AG04450 (cell line): ENCODE measurements at regions of chr2 and their contacts with region 1.

Region 1: GRCh38 chr2:26605195-26605998 is 35.8 kb downstream of the CIB4 start:
- DNase-seq: no peak
- H3K4me3 ChIP-seq: no peak overlapping the region
- H3K27ac ChIP-seq: no peak overlapping the region
- H3K27me3 ChIP-seq: peaks cover 40% of the 10 kb centered on the region
- CTCF ChIP-seq: peak; percentile 90

Region 2: GRCh38 chr2:26623541-26624396 is 18.4 kb after region 1 on chr2:
- CTCF ChIA-PET with region 1: interaction called, 14 read pairs
- POLR2A ChIA-PET with region 1: no interaction called
- DNase-seq: no peak
- H3K4me3 ChIP-seq: peak overlapping the region; percentile 10; the same call in 1 of the 2 replicates
- H3K27ac ChIP-seq: peak overlapping the region; percentile 31
- H3K27me3 ChIP-seq: peaks cover 22% of the 10 kb centered on the region
- CTCF ChIP-seq: no peak

Region 3: DNA sequence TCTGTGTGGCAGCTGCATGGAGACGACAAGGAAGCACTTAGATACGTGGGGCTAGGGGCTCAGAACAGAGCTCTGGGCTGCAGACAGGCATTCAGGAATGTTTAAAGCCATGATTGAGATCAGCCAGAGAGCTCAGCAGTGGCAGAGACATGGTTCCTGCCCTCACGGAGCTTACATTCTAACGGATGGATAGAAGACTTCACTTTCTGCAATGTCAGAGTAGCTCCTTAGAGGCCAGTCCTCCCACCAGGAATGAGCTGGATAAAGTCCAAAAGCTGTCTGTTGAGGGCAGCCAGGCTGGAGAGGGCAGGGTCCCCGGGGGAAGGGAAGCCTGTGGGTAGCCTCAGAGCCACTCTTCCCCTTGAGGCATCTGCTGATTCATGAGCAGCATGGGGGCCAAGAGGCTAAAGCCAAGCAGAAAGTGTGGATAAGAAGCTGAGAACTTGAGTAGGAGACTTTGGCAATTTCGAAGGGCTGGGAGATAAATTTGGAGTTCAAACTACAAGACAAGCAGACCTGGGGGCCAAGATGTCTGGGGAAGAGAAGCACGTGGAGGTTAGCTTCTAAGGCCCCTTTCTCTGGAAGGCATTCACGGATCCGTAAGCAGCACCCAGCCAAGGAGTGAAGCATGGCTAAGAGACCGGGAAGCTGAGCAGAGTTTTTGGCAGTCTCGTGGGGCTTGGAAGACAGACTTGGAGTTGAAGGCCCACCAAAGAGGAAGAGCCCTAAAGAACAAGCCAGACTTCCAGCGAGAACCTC is 45.5 kb after region 1 on chr2:
- CTCF ChIA-PET with region 1: interaction called, 11 read pairs
- POLR2A ChIA-PET with region 1: no interaction called
- DNase-seq: no peak
- H3K4me3 ChIP-seq: no peak overlapping the region
- H3K27ac ChIP-seq: peak overlapping the region; percentile 21
- H3K27me3 ChIP-seq: peaks cover 67% of the 10 kb centered on the region
- CTCF ChIP-seq: no peak

Region 4: GRCh38 chr2:26735096-26735495 is 129.7 kb after region 1 on chr2:
- CTCF ChIA-PET with region 1: interaction called, 16 read pairs
- POLR2A ChIA-PET with region 1: no interaction called
- DNase-seq: peak; percentile 74
- H3K4me3 ChIP-seq: no peak overlapping the region
- H3K27ac ChIP-seq: no peak overlapping the region
- H3K27me3 ChIP-seq: peaks cover 17% of the 10 kb centered on the region
- CTCF ChIP-seq: no peak

Region 5: DNA sequence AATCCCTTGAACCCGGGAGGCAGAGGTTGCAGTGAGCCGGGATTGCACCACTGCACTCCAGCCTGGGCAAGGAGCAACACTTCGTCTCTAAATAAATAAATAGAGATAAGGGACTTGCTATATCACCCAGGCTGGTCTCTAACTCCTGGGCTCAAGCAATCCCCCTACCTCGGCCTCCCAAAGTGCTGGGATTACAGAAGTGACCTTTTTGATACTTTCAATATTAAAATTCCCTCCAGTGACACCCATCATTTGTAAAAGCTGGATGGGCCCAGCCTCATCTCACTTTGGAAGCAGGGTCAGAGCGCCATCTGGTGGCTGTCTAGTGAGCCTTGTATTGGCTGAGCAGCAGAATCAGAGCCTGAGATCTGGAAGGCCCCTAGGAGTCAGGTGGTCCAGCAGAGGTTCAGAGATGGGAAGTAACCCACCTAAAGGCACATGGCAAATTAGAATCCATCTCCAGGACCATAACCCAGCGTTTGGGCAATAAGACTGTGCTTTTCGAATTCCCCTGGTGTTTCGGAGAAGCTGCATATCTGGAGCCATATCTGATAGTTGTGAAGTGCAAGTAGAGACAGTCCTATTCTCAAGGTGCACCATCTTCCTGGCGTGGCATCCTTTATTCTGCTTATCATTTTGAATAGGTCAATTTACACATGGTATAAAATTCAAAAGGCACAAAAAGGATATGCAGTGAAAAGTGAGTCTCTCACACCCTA is 140.4 kb after region 1 on chr2:
- CTCF ChIA-PET with region 1: interaction called, 255 read pairs
- POLR2A ChIA-PET with region 1: interaction called, 3 read pairs
- DNase-seq: peak; percentile 56
- H3K4me3 ChIP-seq: no peak overlapping the region
- H3K27ac ChIP-seq: no peak overlapping the region
- H3K27me3 ChIP-seq: peaks cover 6% of the 10 kb centered on the region
- CTCF ChIP-seq: peak; percentile 96